BJ (cell line): ENCODE measurements at regions of chr9 and their contacts with region 1.

Region 1: DNA sequence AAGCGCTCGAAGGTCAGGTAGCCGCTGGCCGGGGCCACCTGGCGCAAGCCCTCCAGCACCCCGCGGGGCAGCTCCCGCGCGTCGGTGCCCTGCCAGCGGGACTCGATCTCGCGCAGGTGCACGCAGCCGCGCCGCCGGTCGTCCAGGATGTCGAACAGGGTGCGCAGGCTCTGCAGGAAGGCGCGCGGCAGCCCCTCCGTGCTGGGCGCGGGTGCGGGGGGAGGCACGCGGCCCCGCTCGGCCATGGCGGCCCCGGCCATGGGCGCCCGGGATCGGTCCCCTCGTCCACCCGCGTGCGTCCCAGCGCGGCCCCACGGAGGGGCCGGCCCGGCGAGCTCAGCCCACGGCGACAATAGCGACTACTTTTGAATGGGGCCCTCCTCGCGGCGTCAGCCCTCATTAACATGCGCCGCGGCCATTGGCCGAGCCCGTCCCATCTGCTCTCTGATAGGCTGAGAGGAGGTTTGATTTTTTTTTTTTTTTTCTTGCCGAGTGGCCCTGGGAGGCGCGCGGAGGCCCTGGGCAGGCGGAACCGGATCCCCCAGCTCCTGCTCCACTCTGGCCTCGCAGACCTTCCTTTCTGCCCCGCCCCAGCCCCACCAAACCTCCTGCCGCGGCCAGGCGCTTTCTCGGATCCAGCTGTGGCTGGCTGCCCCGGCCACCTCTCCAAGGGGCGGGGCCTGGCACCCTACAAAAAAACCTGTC is at the start of gene SAPCD2:
- DNase-seq: no peak
- H3K4me3 ChIP-seq: peak within 1 kb of the TSS; percentile 39
- H3K27me3 ChIP-seq: no peaks in the 10 kb centered on the region
- CTCF ChIP-seq: no peak
- polyA plus RNA-seq, gene SAPCD2: 5.1 and 8.6 TPM in 2 replicates

Region 2: DNA sequence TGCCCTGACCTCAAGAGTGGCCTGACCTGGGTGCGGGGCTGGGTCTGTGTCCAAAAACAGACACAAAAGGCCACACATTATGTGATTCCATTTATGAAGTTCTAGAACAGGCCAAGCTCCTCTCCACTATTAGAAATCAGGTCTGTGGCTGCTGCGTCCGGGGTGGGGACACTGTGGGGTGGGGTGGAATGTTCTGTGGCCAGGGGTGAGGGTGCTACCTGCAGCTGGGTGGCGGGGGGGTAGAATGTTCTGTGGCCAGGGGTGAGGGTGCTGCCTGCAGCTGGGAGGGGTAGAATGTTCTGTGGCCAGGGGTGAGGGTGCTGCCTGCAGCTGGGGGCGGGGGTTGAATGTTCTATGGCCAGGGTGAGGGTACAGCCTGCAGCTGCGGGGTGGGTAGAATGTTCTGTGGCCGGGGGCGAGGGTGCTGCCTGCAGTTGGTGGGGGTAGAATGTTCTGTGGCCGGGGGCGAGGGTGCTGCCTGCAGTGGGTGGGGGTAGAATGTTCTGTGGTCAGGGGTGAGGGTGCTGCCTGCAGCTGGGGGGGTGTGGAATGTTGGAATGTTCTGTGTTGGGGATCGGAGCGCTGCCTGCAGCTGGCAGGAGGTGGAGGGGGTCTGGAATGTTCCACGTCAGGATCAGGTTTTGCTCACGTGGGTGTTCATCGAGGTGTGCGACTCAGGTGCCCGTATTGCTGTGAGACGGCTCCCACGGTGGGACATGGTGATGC is 110.0 kb before region 1 on chr9:
- CTCF ChIA-PET with region 1: no interaction called
- POLR2A ChIA-PET with region 1: no interaction called
- DNase-seq: no peak
- H3K4me3 ChIP-seq: no peak overlapping the region
- H3K27me3 ChIP-seq: no peaks in the 10 kb centered on the region; the same call in 1 of the 2 replicates
- CTCF ChIP-seq: no peak

Region 3: DNA sequence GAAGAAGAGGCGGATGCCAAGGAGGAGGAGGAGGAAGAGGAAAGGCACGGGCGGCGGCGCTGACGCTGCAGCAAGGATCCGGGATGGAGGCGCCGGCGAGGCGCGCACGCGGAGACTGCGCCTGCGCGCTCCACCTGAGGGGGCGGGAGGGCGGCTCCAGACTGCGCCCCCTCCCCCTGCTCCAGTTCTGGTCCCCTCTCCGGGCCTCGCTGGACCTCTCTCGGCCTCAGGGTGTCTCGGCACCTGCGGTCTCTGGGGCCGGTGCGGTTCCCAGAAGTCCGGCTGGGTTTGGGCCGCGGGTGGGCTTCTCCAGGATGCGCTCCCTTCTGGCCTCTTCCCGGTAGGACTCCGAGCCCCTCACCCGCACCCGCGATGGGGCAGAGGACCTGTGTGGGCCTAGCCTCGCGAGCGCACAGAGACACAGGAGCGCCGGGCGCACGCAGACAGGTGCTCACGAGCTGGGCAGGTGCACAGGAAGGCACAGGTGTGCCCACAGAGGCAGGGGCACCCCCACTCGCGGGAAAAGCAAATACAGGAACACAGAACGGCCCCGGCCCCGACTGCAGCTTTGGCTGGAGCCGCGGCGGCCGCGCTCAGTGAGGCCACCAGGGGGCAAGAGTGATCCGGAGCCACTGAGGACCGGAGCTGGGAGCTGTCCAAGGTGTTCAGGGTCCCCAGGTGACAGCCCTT is 24.1 kb before region 1 on chr9 and contains the start of gene NPDC1:
- CTCF ChIA-PET with region 1: interaction called, 153 read pairs
- POLR2A ChIA-PET with region 1: no interaction called
- DNase-seq: no peak
- H3K4me3 ChIP-seq: peak within 1 kb of the TSS; percentile 55
- H3K27me3 ChIP-seq: peaks cover 7% of the 10 kb centered on the region; the same call in 1 of the 2 replicates
- CTCF ChIP-seq: peak; percentile 95
- polyA plus RNA-seq, gene NPDC1: 21.8 and 31.9 TPM in 2 replicates

Region 4: DNA sequence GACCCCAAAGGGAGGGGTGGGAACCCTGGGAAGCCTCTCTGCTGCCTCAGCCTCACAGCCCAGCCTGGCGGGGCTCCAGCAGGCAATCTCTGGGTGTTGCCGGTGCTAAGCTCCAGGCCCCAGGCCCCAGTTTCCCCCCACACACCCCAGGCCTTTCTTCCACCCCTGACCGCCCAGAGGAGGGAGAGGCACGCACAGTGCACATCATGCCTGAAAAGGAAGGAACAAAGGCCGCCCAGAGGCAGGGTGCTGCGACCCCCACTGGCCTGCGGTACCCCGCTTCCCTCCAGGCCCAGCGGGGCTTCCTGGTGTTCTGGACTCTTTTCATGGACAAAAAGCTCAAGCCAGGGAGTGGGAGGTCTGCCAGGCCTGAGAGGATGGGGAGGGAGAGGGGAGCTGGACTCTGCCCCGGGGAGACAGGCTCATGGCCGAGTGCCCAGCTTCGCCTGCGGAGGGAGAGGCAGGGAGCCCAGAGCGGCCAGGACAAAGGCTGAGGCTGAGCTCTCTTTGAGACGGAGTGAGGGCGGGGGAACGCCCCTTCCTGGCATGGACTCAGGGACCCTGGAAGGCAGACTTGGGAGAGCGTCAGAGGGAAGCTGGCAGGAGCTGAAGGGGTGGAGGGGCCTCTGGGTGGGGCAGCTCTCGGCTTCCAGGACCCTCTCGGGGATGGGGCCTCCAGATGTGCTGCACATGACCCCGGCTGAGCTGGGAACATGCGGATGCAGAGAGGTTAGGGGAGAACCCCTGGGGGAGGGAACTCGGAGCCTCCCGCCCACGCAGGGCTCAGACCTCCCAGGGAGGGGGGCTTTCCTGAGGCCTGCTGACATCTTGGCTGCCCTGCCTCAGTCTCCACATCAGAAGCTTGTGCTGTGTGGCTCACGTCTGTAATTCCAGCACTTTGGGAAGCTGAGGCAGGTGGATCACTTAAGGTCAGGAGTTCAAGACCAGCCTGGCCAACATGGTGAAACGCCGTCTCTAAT is 14.7 kb before region 1 on chr9:
- CTCF ChIA-PET with region 1: interaction called, 49 read pairs
- POLR2A ChIA-PET with region 1: no interaction called
- DNase-seq: no peak
- H3K4me3 ChIP-seq: no peak overlapping the region
- H3K27me3 ChIP-seq: peaks cover 12% of the 10 kb centered on the region
- CTCF ChIP-seq: no peak

Region 5: DNA sequence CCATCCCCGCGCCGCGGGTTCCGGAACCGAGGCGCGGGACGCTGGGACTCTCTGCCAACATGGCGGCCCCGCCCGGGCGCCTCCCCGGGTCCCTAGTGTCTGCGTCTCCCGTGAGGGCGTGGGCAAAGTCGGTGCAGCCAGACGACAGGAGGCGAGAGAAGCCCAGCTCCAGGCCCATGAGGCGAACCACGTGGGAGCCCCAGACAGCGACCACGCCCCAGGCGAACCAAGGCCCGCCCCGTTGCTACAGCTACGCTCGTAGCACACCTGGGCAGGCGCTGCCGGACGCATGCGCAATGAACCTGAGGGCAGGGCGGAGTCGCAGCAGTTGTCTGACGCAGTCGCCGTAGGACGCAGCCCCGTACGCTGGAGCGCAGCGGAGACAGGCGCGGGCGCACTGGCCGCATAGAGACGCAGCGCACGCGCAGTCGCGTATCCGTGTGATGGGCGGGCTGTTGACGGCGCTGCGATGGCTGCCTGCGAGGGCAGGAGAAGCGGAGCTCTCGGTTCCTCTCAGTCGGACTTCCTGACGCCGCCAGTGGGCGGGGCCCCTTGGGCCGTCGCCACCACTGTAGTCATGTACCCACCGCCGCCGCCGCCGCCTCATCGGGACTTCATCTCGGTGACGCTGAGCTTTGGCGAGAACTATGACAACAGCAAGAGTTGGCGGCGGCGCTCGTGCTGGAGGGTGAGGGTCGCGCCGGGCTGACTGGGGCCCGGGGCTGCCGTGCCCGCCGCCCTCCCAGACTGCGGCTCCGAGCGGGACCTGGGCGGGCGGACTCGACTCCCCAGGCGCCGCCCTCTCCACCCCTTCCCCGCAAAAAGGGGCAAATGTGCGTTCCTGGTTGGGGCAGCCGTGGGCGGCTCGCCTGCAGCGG is 16.4 kb after region 1 on chr9 and contains the start of gene MAN1B1:
- CTCF ChIA-PET with region 1: interaction called, 69 read pairs
- POLR2A ChIA-PET with region 1: no interaction called
- DNase-seq: peak; percentile 96
- H3K4me3 ChIP-seq: peak within 1 kb of the TSS; percentile 64
- H3K27me3 ChIP-seq: no peaks in the 10 kb centered on the region
- CTCF ChIP-seq: no peak
- polyA plus RNA-seq, gene MAN1B1: 53.0 and 80.0 TPM in 2 replicates

Region 6: GRCh38 chr9:137097761-137098462 is 27.6 kb after region 1 on chr9:
- CTCF ChIA-PET with region 1: no interaction called
- POLR2A ChIA-PET with region 1: no interaction called
- DNase-seq: no peak
- H3K4me3 ChIP-seq: no peak overlapping the region
- H3K27me3 ChIP-seq: no peaks in the 10 kb centered on the region
- CTCF ChIP-seq: no peak